Ascending aorta (tissue), 2 donors: ENCODE measurements at regions of chr17 and their contacts with region 1.

Region 1: GRCh38 chr17:12421646-12422306 is 243.9 kb upstream of the MYOCD start:
- DNase-seq: no peak
- H3K4me3 ChIP-seq: no peak overlapping the region
- H3K27ac ChIP-seq: no peak overlapping the region
- H3K4me1 ChIP-seq: no peaks in the 10 kb centered on the region
- H3K27me3 ChIP-seq: no peaks in the 10 kb centered on the region
- CTCF ChIP-seq: no peak

Region 2: GRCh38 chr17:11935734-11936406 is 485.9 kb before region 1 on chr17:
- intact Hi-C with region 1: no loop called
- DNase-seq: no peak
- H3K4me3 ChIP-seq: no peak overlapping the region
- H3K27ac ChIP-seq: no peak overlapping the region
- H3K4me1 ChIP-seq: no peaks in the 10 kb centered on the region
- H3K27me3 ChIP-seq: no peaks in the 10 kb centered on the region
- CTCF ChIP-seq: peak in 2 of 3 experiments; percentile 39 to 51

Region 3: GRCh38 chr17:12510535-12510934 is 88.8 kb after region 1 on chr17:
- intact Hi-C with region 1: loop called (anchors 1 kb)
- DNase-seq: no peak
- H3K4me3 ChIP-seq: no peak overlapping the region
- H3K27ac ChIP-seq: no peak overlapping the region
- H3K4me1 ChIP-seq: peaks cover 0 to 8% of the 10 kb centered on the region in 2 donors
- H3K27me3 ChIP-seq: no peaks in the 10 kb centered on the region
- CTCF ChIP-seq: no peak